ENCODE measurements at regions of chr10 and their contacts with region 1.

Region 1: GRCh38 chr10:28302638-28303488 is at the start of gene MPP7:
- DNase-seq: peak; percentile 95
- H3K4me3 ChIP-seq: peak within 1 kb of the TSS; percentile 71
- CTCF ChIP-seq: no peak

Region 2: GRCh38 chr10:27680006-27680557 is 622.8 kb before region 1 on chr10:
- CTCF ChIA-PET with region 1: no interaction called
- POLR2A ChIA-PET with region 1: no interaction called
- DNase-seq: no peak
- H3K4me3 ChIP-seq: no peak overlapping the region
- CTCF ChIP-seq: no peak

Region 3: DNA sequence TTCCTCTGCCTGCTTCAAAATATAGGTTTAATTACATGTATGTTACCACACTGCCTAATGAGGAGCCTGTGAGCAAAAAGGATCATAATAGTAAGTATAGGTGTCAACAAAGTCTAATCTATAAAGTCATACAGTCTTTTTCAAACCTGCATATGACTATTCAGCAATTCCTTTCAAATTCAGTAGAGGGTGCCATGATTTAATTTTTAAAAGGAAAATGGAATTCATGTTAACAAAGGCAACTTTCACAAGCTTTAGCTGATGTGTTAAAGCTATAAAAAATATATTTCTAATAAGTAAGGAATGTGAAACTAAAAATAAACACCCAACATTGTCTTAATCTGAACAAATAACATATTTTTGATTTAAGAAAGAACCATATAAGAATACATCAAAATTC is 52.1 kb before region 1 on chr10:
- CTCF ChIA-PET with region 1: interaction called, 17 read pairs
- POLR2A ChIA-PET with region 1: interaction called, 7 read pairs
- DNase-seq: no peak
- H3K4me3 ChIP-seq: no peak overlapping the region
- CTCF ChIP-seq: peak; percentile 15

Region 4: GRCh38 chr10:28291881-28292297 is 11.0 kb before region 1 on chr10:
- CTCF ChIA-PET with region 1: interaction called, 20 read pairs
- POLR2A ChIA-PET with region 1: no interaction called
- DNase-seq: peak; percentile 65
- H3K4me3 ChIP-seq: no peak overlapping the region
- CTCF ChIP-seq: no peak

Region 5: DNA sequence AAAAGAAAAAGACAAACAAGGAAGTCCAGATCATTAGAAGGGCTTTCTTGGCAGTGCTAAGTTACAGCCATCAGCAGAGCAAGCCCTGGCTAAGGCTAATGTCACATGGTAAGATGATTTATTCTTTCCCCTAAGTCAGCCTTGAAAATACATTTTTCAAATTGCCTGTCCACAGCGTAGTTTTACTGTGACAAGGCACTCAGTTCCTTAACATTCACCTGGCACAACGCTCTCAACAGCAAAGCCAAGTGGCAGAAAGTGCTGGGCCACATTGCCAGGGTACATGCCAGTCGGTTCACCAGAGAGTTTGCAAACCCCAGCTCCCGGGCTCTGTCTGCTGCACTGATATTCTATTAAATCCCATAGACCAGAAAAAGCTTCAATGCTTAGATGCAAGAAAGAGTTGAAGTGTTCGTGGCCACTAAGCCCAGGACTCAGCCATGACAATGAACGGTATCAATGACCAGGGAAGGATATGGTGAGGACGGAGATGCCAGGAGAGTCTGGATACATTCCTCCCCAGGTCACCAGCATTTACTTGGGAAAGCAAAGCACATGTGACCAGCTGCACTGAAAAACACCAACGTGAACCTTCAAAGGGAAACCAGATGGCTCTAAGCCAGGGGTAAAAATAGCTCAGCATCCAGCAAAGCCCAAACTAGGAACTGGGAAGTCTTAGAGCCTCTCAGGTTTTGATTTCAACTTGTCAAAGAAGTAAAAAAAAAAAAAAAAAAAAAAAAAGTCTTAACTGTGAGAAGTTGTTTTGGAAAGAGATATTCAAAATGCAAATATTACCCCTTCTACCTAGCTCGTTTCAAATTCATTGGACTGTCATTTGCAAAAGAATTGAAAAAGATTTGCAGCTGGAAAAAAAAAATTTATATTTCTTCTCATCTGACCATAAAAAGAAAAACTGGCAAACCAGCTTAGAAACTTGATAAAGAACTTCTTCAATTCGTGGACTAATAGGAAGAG is 23.9 kb after region 1 on chr10:
- CTCF ChIA-PET with region 1: interaction called, 11 read pairs
- POLR2A ChIA-PET with region 1: interaction called, 3 read pairs
- DNase-seq: no peak
- H3K4me3 ChIP-seq: no peak overlapping the region
- CTCF ChIP-seq: no peak